HepG2 (cell line): ENCODE measurements at regions of chr3 and their contacts with region 1.

Region 1: GRCh38 chr3:193057616-193058015 is 140.0 kb upstream of the MB21D2 start:
- DNase-seq: no peak
- ATAC-seq: no peak
- H3K4me3 ChIP-seq: no peak overlapping the region
- H3K27ac ChIP-seq: no peak overlapping the region
- H3K4me1 ChIP-seq: no peaks in the 10 kb centered on the region
- H3K27me3 ChIP-seq: no peaks in the 10 kb centered on the region
- CTCF ChIP-seq: no peak
- EP300 ChIP-seq: no peak
- POLR2A ChIP-seq: no peak
- RAD21 ChIP-seq: no peak

Region 2: GRCh38 chr3:193023218-193023617 is 34.4 kb before region 1 on chr3:
- CTCF ChIA-PET with region 1: no interaction called
- POLR2A ChIA-PET with region 1: no interaction called
- in situ Hi-C with region 1: no loop called
- intact Hi-C with region 1: loop called (anchors 2 kb)
- DNase-seq: no peak
- ATAC-seq: no peak
- H3K4me3 ChIP-seq: no peak overlapping the region
- H3K27ac ChIP-seq: no peak overlapping the region
- H3K4me1 ChIP-seq: no peaks in the 10 kb centered on the region
- H3K27me3 ChIP-seq: peaks cover 0 to 5% of the 10 kb centered on the region in 2 experiments; a peak in 1 of 5 replicates
- CTCF ChIP-seq: no peak
- EP300 ChIP-seq: no peak
- POLR2A ChIP-seq: no peak
- RAD21 ChIP-seq: no peak

Region 3: GRCh38 chr3:193095366-193095765 is 37.8 kb after region 1 on chr3:
- CTCF ChIA-PET with region 1: no interaction called
- POLR2A ChIA-PET with region 1: no interaction called
- in situ Hi-C with region 1: no loop called
- intact Hi-C with region 1: no loop called
- DNase-seq: no peak
- ATAC-seq: no peak
- H3K4me3 ChIP-seq: no peak overlapping the region
- H3K27ac ChIP-seq: no peak overlapping the region
- H3K4me1 ChIP-seq: no peaks in the 10 kb centered on the region
- H3K27me3 ChIP-seq: no peaks in the 10 kb centered on the region; a peak in 1 of 5 replicates
- CTCF ChIP-seq: no peak
- EP300 ChIP-seq: no peak
- POLR2A ChIP-seq: no peak
- RAD21 ChIP-seq: no peak